A549 (cell line): ENCODE measurements at regions of chr9 and their contacts with region 1.

Region 1: GRCh38 chr9:73050065-73050816 is 97.4 kb upstream of the ALDH1A1 start:
- DNase-seq: peak; percentile 47 to 82
- ATAC-seq: peak; percentile 62 to 76; a peak in 4 of 6 replicates
- H3K4me3 ChIP-seq: peak overlapping the region; percentile 10; the same call in 1 of the 3 replicates
- H3K27ac ChIP-seq: peak overlapping the region; percentile 87 to 96
- H3K4me1 ChIP-seq: peaks cover 80% of the 10 kb centered on the region
- CTCF ChIP-seq: peak; percentile 20; the same call in 1 of the 3 replicates
- EP300 ChIP-seq: no peak
- POLR2A ChIP-seq: no peak
- RAD21 ChIP-seq: 0 out of 5 replicates have a peak, but pooled peaks have one; percentile 7 to 8

Region 2: GRCh38 chr9:73038613-73039012 is 11.6 kb before region 1 on chr9:
- CTCF ChIA-PET with region 1: interaction called, 15 read pairs
- POLR2A ChIA-PET with region 1: no interaction called
- DNase-seq: peak in 1 of 2 experiments; percentile 77
- ATAC-seq: peak; percentile 77 to 80
- H3K4me3 ChIP-seq: peak overlapping the region; percentile 34
- H3K27ac ChIP-seq: peak overlapping the region; percentile 92 to 96
- H3K4me1 ChIP-seq: peaks cover 71% of the 10 kb centered on the region
- CTCF ChIP-seq: no peak
- EP300 ChIP-seq: 0 out of 5 replicates have a peak, but pooled peaks of 1 of the 2 experiments have one; percentile 23
- POLR2A ChIP-seq: peak; percentile 10; the same call in 1 of the 2 replicates
- RAD21 ChIP-seq: no peak

Region 3: DNA sequence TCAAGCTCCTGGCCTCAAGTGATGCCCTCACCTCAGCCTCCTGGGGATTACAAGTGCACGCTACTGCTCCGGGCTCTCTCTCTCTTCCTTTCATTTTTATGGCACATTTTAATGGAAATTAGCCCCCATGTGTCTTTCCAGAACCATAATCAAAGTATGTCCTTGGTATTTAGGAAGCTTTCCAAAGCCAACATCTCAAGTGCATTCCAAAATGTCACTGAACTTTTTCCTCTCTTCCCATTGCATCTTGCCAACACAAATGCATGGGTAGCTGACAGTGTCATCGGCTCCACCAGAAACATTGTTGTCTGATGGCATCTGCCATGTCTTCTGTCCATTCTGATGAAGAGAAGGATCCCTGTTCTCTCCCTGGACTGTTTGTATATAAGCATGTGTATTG is 10.9 kb after region 1 on chr9:
- CTCF ChIA-PET with region 1: interaction called, 22 read pairs
- POLR2A ChIA-PET with region 1: no interaction called
- DNase-seq: no peak
- ATAC-seq: no peak; a peak in 1 of 6 replicates
- H3K4me3 ChIP-seq: no peak overlapping the region
- H3K27ac ChIP-seq: peak overlapping the region; percentile 43 to 60; a peak in 4 of 6 replicates
- H3K4me1 ChIP-seq: peaks cover 27% of the 10 kb centered on the region
- CTCF ChIP-seq: no peak
- EP300 ChIP-seq: no peak
- POLR2A ChIP-seq: no peak
- RAD21 ChIP-seq: no peak

Region 4: GRCh38 chr9:73294336-73294735 is 244.1 kb after region 1 on chr9:
- CTCF ChIA-PET with region 1: no interaction called
- POLR2A ChIA-PET with region 1: no interaction called
- DNase-seq: no peak
- ATAC-seq: no peak
- H3K4me3 ChIP-seq: no peak overlapping the region
- H3K27ac ChIP-seq: no peak overlapping the region
- H3K4me1 ChIP-seq: no peaks in the 10 kb centered on the region
- CTCF ChIP-seq: no peak
- EP300 ChIP-seq: no peak
- POLR2A ChIP-seq: no peak
- RAD21 ChIP-seq: no peak